SK-N-SH (cell line): ENCODE measurements at regions of chr6 and their contacts with region 1.

Region 1: DNA sequence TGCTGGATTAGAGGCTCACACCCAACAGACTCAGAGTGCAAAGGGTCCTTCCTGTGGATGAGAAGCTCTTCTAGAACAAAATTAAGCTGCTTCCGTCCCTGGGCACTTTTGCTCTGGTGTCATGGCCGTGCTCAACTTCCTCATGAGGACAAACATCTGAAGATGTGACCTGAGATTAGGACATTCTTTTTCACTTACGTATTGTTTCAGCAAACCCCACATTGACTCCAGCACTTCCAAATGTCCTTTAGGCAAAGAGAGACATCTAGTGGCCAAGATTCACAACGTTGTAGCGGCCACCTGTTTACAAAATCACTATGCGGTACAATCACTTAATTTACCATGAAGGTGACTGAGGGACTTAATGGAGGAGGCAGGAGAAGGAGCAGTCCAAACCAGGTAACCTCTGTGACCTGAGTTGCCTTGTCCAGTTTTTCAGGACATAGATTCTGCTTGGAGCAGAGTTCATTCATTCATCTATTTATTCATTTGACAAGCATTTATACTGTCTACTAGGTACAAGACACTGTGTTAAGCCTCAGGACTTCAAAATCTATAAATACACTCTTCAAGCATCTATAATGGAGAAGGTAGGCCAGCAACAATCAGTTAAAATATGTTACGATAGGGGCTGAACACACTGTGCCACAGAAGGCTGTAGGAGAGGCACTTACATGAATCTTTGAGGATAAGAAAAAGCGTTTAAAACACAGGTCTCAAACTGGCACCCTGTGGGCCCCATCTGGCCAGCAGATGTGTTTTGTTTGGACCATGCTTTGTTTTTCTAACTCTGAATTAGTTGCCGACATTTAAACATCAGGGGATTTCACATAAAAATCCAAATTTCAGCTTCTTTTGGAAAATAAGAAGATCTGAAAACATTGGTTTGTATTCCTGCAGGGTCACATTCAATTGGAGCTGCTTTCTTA is 5.6 kb upstream of the ADGRF1 start:
- DNase-seq: peak; percentile 33
- H3K4me3 ChIP-seq: no peak overlapping the region; a peak in 1 of 4 replicates
- H3K27ac ChIP-seq: no peak overlapping the region
- H3K4me1 ChIP-seq: peaks cover 0 to 2% of the 10 kb centered on the region in 2 experiments; a peak in 2 of 4 replicates
- H3K27me3 ChIP-seq: peaks cover 5% of the 10 kb centered on the region; the same call in 1 of the 2 replicates
- CTCF ChIP-seq: peak; percentile 79
- EP300 ChIP-seq: no peak
- RAD21 ChIP-seq: peak; percentile 79

Region 2: DNA sequence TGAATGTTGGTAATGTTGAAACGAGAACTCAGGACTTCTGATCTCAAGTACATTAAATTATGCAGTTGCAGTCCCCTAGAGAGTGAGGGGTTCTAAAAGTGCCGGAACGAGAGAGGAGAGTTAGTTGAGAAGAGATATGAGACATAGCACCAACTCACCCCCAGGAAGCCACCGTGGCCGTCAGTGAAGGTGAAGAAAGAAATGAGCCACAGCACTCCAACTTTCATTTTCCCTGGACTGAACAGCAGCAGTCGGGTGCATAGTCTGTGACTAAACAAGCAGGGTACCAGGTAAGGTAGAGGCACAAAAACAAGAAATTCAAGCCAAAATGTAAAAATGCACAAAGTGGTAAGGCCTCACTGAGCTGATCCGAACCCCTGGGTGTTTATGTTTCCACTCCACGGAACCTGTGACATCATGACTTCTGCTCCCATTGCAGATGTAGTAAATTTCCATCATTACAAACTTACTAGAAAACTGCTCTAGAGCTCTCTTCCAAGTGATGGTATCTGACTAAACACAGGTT is 18.8 kb before region 1 on chr6:
- CTCF ChIA-PET with region 1: interaction called, 12 read pairs
- POLR2A ChIA-PET with region 1: no interaction called
- DNase-seq: no peak
- H3K4me3 ChIP-seq: peak overlapping the region in 1 of 2 experiments; percentile 46; a peak in 1 of 4 replicates
- H3K27ac ChIP-seq: no peak overlapping the region
- H3K4me1 ChIP-seq: no peaks in the 10 kb centered on the region
- H3K27me3 ChIP-seq: peaks cover 27% of the 10 kb centered on the region; the same call in 1 of the 2 replicates
- CTCF ChIP-seq: no peak
- EP300 ChIP-seq: no peak
- RAD21 ChIP-seq: no peak

Region 3: GRCh38 chr6:47066418-47066817 is 18.7 kb after region 1 on chr6:
- CTCF ChIA-PET with region 1: interaction called, 12 read pairs
- POLR2A ChIA-PET with region 1: no interaction called
- DNase-seq: no peak
- H3K4me3 ChIP-seq: no peak overlapping the region
- H3K27ac ChIP-seq: no peak overlapping the region
- H3K4me1 ChIP-seq: peaks cover 0 to 5% of the 10 kb centered on the region in 2 experiments; a peak in 1 of 4 replicates
- H3K27me3 ChIP-seq: no peaks in the 10 kb centered on the region
- CTCF ChIP-seq: no peak
- EP300 ChIP-seq: no peak
- RAD21 ChIP-seq: no peak